ENCODE measurements at regions of chr18 and their contacts with region 1.

Region 1: GRCh38 chr18:45212181-45213039 is 402.9 kb upstream of the SLC14A2 start:
- DNase-seq: peak; percentile 84 to 92 (median 84)
- ATAC-seq: peak; percentile 96 to 97
- H3K4me3 ChIP-seq: no peak overlapping the region
- H3K27ac ChIP-seq: no peak overlapping the region
- H3K4me1 ChIP-seq: no peaks in the 10 kb centered on the region
- H3K27me3 ChIP-seq: no peaks in the 10 kb centered on the region

Region 2: GRCh38 chr18:44909191-44909719 is 303.2 kb before region 1 on chr18:
- intact Hi-C with region 1: loop called in 1 of 4 experiments (anchors 10 kb)
- DNase-seq: no peak
- ATAC-seq: no peak
- H3K4me3 ChIP-seq: no peak overlapping the region
- H3K27ac ChIP-seq: no peak overlapping the region
- H3K4me1 ChIP-seq: no peaks in the 10 kb centered on the region
- H3K27me3 ChIP-seq: no peaks in the 10 kb centered on the region